Activated T-helper 1 cell treated with anti-CD3 and anti-CD28 coated beads, Interleukin-12 subunit alpha, Interleukin-12 subunit beta, Interleukin-2, Interleukin-4 antibody, amounts not matched to agents 30 ng/mL and 10 ng/mL and 1 ng/mL, durations not matched to agents 14 hours and 24 hours and 36 hours (primary cell): ENCODE measurements at regions of chr12 and their contacts with region 1.

Region 1: DNA sequence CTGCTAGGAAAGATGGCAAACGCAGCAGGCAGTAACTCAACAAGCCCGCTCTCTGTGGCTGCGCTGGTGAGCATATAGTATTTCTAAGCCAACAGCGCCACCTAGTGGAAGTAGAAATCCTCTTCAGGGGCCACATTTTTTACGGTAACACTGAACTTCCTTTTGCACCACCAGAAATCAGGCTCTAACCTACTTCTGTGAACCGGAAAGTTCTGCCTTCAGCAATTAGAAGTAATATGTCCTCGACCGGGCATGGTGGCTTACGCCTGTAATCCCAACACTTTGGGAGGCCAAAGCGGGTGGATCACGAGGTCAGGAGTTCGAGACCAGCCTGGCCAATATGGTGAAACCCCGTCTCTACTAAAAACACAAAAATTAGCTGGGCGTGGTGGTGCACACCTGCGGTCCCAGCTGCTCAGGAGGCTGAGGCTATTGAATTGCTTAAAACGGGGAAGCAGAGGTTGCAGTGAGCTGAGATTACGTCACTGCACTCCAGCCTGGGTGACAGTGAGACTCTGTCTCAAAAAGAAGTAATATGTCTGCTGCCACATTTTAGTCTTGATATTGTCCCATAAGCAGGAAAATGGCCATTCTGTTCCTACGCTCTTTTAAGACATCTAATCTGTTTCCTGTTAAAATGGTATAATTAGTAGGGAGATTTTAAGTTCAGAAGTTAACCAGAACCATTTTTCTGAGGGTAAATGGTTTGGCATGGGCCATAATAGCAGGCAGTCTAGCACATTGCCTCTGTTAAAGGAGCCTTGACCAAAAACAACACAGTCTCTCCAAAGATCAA is 26.8 kb downstream of the APOBEC1 start:
- DNase-seq: peak; percentile 66
- H3K4me3 Mint-ChIP-seq: peak overlapping the region; percentile 82
- H3K27ac Mint-ChIP-seq: peak overlapping the region; percentile 83
- H3K4me1 Mint-ChIP-seq: peaks cover 24% of the 10 kb centered on the region
- H3K27me3 Mint-ChIP-seq: peaks cover 3% of the 10 kb centered on the region

Region 2: DNA sequence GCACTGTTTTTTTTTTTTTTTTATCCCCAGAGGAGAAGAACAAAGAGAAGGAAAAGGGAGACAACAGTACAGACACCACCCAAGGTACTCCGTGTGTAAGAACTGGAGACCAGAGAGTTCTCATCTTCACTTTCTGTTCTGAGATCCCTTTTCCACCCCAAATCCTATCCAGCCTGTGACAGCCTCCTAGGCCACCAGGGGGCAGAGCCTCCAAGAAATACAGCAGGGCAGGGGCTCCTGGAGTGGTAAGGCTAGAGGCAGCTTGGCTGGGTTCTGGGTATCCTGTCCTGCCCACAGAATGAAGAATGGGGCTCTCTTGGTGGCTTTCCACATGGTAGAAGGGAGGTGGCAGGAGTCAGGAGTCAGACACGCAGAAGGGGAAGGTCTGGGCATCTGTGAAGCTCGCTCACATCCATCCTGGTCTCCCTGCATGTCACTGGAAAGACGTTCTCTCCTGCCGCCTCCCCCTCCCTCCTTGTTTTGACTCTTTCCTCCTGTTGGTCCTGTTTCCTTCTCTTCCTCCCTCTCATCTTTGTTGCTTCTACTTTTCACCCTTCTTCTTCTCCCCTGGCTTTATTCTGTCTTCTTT is 496.8 kb before region 1 on chr12:
- intact Hi-C with region 1: loop called (anchors 1 kb)
- DNase-seq: peak; percentile 32
- H3K4me3 Mint-ChIP-seq: no peak overlapping the region
- H3K27ac Mint-ChIP-seq: peak overlapping the region; percentile 24
- H3K4me1 Mint-ChIP-seq: peaks cover 6% of the 10 kb centered on the region
- H3K27me3 Mint-ChIP-seq: no peaks in the 10 kb centered on the region

Region 3: GRCh38 chr12:7219599-7220243 is 419.2 kb before region 1 on chr12:
- intact Hi-C with region 1: loop called (anchors 1 kb)
- DNase-seq: peak; percentile 42
- H3K4me3 Mint-ChIP-seq: no peak overlapping the region
- H3K27ac Mint-ChIP-seq: no peak overlapping the region
- H3K4me1 Mint-ChIP-seq: no peaks in the 10 kb centered on the region
- H3K27me3 Mint-ChIP-seq: peaks cover 3% of the 10 kb centered on the region

Region 4: DNA sequence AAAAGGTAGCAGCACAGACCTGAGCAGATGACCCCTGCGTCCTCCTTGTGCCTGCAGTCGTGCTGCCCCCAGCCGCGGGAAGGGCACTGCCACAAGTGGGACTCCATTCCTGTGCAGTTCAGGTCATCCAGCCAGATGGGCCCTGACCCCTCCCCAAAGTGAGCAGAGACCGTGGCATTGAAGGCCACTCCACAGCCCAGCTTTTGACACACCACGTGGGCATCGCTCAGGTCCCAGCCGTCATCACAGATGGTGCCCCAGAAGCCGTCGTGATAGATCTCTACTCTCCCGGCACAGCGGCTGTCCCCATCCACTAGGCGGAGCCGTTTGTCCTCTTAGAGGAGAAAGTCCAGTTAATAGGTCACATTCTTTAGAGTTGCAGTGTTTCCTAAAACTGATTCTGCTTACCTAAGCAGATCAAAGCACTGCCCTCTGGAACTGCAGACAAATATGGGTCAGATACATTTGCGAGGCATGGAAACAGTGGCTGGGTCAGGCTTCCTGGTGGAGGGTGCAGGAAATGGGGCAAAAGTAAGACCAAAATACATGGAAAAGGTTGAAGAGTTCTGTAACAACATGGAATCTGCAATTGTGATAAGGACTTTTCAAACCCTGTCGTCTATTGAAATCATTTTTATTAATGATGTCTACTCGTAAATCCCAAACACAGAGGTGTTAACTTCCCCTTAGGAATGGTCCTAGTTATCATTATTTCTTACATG is 264.4 kb before region 1 on chr12:
- intact Hi-C with region 1: loop called (anchors 2 kb)
- DNase-seq: no peak
- H3K4me3 Mint-ChIP-seq: no peak overlapping the region
- H3K27ac Mint-ChIP-seq: no peak overlapping the region
- H3K4me1 Mint-ChIP-seq: no peaks in the 10 kb centered on the region
- H3K27me3 Mint-ChIP-seq: peaks cover 6% of the 10 kb centered on the region

Region 5: GRCh38 chr12:7460375-7461259 is 178.3 kb before region 1 on chr12:
- intact Hi-C with region 1: loop called (anchors 2 kb)
- DNase-seq: peak; percentile 11
- H3K4me3 Mint-ChIP-seq: no peak overlapping the region
- H3K27ac Mint-ChIP-seq: no peak overlapping the region
- H3K4me1 Mint-ChIP-seq: no peaks in the 10 kb centered on the region
- H3K27me3 Mint-ChIP-seq: peaks cover 5% of the 10 kb centered on the region

Region 6: DNA sequence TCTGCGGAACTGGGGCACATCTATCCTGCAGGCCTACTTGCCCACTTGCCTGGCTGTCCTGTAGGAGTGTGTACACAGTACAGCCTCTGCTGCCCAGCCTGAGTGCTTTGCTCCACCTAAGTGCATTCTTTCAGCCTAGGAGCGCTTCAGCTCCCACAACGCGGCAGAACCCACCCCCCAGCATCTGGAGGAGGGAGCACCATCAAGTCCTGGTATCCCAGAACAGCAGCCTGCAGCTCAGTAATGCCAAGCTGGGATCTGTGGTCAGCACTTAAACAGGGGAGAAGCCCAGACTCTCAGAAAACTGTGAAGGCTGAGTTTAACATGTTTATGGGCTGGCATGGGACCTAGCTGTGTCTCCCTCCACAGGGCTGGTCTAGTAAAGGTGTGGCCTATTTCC is 55.4 kb before region 1 on chr12:
- intact Hi-C with region 1: loop called (anchors 1 kb)
- DNase-seq: no peak
- H3K4me3 Mint-ChIP-seq: no peak overlapping the region
- H3K27ac Mint-ChIP-seq: no peak overlapping the region
- H3K4me1 Mint-ChIP-seq: peaks cover 7% of the 10 kb centered on the region
- H3K27me3 Mint-ChIP-seq: peaks cover 6% of the 10 kb centered on the region